A549 (cell line): ENCODE measurements at regions of chr19 and their contacts with region 1.

Region 1: GRCh38 chr19:35135389-35135909 is 590 bp upstream of the LGI4 start:
- DNase-seq: peak; percentile 81 to 99
- ATAC-seq: peak; percentile 64 to 91
- H3K4me3 ChIP-seq: no peak overlapping the region
- H3K27ac ChIP-seq: no peak overlapping the region
- H3K4me1 ChIP-seq: peaks cover 5% of the 10 kb centered on the region; the same call in 1 of the 3 replicates
- CTCF ChIP-seq: peak; percentile 95
- EP300 ChIP-seq: no peak
- POLR2A ChIP-seq: no peak
- RAD21 ChIP-seq: peak; percentile 76 to 86

Region 2: GRCh38 chr19:34831714-34832113 is 303.7 kb before region 1 on chr19:
- CTCF ChIA-PET with region 1: no interaction called
- POLR2A ChIA-PET with region 1: no interaction called
- DNase-seq: no peak
- ATAC-seq: no peak
- H3K4me3 ChIP-seq: no peak overlapping the region
- H3K27ac ChIP-seq: no peak overlapping the region
- H3K4me1 ChIP-seq: no peaks in the 10 kb centered on the region
- CTCF ChIP-seq: no peak
- EP300 ChIP-seq: no peak
- POLR2A ChIP-seq: no peak
- RAD21 ChIP-seq: no peak

Region 3: DNA sequence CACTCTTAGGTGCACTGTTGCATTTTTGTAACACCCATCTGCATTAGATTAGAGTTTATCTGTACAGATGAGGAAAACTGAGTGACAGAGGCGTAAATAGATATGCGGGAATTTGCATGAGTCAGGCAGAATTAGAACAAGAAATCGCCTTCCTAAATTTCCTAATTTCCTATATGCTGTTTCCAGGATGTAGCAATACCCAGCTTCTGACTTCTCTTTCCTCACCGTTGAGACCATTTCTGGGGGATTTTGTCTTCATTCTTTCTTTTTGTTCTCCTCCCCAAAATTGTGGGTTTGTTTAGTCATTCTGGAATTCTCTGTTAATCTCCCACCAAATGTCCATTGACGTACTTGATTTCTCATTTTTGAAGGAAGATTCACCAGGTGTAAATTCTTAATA is 160.8 kb before region 1 on chr19:
- CTCF ChIA-PET with region 1: interaction called, 50 read pairs
- POLR2A ChIA-PET with region 1: no interaction called
- DNase-seq: no peak
- ATAC-seq: no peak
- H3K4me3 ChIP-seq: no peak overlapping the region
- H3K27ac ChIP-seq: peak overlapping the region in 1 of 2 experiments; percentile 75; a peak in 2 of 6 replicates
- H3K4me1 ChIP-seq: peaks cover 18% of the 10 kb centered on the region
- CTCF ChIP-seq: no peak
- EP300 ChIP-seq: no peak
- POLR2A ChIP-seq: no peak
- RAD21 ChIP-seq: no peak

Region 4: DNA sequence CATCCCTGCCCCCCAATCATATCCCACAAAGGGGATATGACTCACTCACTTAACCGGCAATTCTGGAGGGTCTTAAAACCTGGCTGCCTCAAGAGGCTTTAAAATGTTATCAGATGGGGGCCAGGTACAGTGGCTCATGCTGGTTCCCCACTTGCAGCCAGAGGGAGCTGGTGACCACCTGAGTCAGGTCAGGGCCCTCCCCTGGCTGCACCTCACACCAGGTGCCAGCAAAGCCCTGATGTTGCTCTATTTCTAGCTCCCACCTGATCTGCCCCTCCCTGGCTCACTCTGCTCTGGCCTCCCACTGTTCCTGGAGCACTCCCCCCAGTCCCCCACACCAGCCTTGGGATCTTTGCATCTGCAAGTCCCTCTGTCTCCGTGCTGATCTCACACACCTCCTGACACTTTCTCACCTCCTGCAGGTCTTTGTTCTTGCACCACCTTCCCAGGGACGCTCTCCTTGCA is 79.7 kb before region 1 on chr19:
- CTCF ChIA-PET with region 1: interaction called, 13 read pairs
- POLR2A ChIA-PET with region 1: no interaction called
- DNase-seq: peak in 1 of 2 experiments; percentile 51
- ATAC-seq: peak; percentile 78 to 86
- H3K4me3 ChIP-seq: no peak overlapping the region
- H3K27ac ChIP-seq: no peak overlapping the region
- H3K4me1 ChIP-seq: peaks cover 7% of the 10 kb centered on the region; the same call in 1 of the 3 replicates
- CTCF ChIP-seq: peak; percentile 45
- EP300 ChIP-seq: no peak
- POLR2A ChIP-seq: no peak
- RAD21 ChIP-seq: peak; percentile 45 to 51; a peak in 3 of 5 replicates

Region 5: DNA sequence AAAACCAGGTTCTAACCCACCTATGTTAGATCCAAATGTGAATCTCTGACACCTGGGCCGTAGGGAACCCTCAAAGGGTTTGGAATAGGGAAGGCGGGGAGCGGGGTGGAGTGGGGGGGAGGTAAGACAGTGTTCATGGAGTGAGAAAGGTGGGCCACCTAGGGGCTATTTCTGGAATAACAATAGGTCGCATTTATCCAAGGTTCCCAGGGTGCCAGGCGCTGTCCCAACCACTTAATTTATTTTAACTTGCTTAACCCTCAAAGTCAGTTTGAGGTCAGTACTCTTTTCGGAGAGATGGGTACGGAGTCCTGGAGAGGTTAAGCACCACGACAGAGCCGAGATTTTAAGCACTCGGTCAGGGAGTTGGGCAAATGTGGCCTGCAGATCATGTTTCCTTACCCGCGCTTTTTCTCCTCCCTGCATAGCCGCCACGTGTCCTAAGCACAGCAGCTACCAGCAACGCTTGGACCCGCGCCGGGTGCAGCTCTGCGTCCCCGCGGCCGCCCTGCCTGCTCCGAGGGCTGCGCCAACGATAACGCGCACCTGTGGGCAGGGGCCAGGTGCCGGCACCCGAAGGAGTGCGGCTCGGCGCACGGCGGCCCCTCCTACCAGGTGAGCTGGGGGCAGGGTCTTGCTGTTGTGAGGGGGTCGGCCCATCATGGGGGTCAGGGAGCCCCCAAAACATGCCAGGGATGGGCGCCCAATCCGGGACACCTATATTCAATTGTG is 44.8 kb before region 1 on chr19:
- CTCF ChIA-PET with region 1: interaction called, 24 read pairs
- POLR2A ChIA-PET with region 1: no interaction called
- DNase-seq: peak; percentile 82 to 99
- ATAC-seq: peak; percentile 82 to 92
- H3K4me3 ChIP-seq: peak overlapping the region; percentile 29; the same call in 2 of the 3 replicates
- H3K27ac ChIP-seq: peak overlapping the region; percentile 10 to 60; a peak in 4 of 6 replicates
- H3K4me1 ChIP-seq: peaks cover 11% of the 10 kb centered on the region; the same call in 2 of the 3 replicates
- CTCF ChIP-seq: peak; percentile 95
- EP300 ChIP-seq: no peak
- POLR2A ChIP-seq: no peak
- RAD21 ChIP-seq: peak; percentile 88 to 97

Region 6: DNA sequence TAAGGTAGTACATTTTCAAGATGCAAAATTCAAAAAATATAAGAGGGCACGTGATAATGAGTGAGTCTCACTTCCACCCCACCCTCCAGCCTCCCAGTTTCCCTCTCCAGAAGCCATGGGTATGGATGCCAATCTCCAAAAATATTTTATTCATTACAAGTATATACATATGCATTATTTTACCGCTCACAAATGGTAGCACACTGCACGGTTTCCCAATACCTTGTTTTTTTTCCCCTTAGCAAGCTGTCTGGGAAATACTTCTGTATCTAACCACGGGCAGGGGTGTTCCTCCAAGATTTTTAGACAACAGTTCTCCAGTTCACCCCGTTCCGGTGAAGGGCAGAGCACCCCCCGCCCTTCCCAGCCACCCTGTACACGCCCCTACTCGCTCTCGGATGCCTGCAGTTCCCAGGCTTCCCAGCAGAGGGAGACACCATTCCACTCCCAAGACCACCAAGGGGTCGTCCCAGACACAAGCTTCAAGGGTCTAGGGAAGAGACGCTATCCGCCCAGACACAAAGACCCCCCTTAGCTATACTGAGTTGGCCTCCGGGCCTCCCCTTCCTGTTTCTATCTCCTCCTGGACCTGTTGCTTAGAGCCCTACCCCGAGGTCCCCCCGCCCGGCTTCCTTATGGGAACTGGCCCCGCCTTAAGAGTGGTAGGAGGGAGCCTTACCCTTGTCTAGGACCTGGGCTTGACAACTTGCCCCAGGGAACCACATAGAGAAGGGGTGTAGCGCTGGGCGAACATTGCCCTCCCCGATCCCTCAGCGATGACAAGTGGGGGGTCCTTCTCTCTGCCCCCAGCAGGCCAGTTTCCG is 20.9 kb before region 1 on chr19:
- CTCF ChIA-PET with region 1: interaction called, 148 read pairs
- POLR2A ChIA-PET with region 1: no interaction called
- DNase-seq: peak; percentile 74 to 95
- ATAC-seq: peak; percentile 45 to 86
- H3K4me3 ChIP-seq: peak overlapping the region; percentile 6; the same call in 2 of the 3 replicates
- H3K27ac ChIP-seq: peak overlapping the region; percentile 19 to 36; a peak in 3 of 6 replicates
- H3K4me1 ChIP-seq: peaks cover 13% of the 10 kb centered on the region; the same call in 1 of the 3 replicates
- CTCF ChIP-seq: peak; percentile 98
- EP300 ChIP-seq: no peak
- POLR2A ChIP-seq: no peak
- RAD21 ChIP-seq: peak; percentile 80